Heart left ventricle (tissue), 16 donors: ENCODE measurements at regions of chr13 and their contacts with region 1.

Region 1: DNA sequence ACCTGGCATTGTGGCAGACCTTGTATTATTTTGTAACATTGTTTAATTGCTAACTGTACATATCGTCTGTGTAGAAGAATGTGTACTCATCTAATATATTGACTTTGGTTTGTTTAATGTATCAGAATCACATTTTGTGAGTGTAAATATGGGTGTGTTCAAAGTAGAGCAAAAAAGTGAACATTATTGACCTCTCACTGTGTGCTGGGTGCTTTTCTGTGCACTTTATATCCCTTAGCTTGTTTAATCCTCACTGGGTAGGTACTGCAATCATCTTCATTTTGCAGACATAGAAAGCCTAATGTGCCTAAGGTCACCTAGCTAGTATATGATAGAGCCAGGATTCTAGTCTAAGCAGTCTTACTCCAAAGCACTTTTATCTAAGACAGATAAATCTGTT is 245.1 kb downstream of the MAB21L1 start:
- DNase-seq: no peak
- ATAC-seq: no peak
- H3K4me3 ChIP-seq: no peak overlapping the region
- H3K27ac ChIP-seq: no peak overlapping the region
- H3K4me1 ChIP-seq: no peaks in the 10 kb centered on the region
- H3K27me3 ChIP-seq: no peaks in the 10 kb centered on the region
- CTCF ChIP-seq: no peak
- POLR2A ChIP-seq: no peak

Region 2: DNA sequence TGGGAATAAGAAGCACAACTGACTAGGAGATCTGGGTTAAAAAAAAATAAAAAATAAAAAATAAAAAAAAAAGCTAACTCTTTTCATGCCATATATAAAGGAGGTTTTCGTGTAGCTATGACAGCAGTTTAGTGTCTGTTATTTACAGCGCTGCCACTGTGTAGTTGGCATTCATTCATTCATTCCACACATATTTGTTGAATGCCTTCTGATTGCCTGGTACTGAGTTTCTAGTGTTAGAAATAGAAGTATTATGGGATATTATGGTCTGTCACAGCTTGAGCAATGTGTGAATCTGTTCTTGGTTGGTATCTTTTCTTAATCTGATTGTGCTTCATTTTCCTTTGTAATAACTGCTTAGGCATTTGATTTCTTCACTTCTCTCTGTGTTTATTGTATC is 51.9 kb before region 1 on chr13:
- intact Hi-C with region 1: loop called in 1 of 10 experiments (anchors 10 kb)
- DNase-seq: no peak
- ATAC-seq: peak; percentile 68 to 90 (median 73)
- H3K4me3 ChIP-seq: peak overlapping the region in 6 of 12 donors; percentile 1 to 32 (median 15)
- H3K27ac ChIP-seq: peak overlapping the region; percentile 2 to 73 (median 62)
- H3K4me1 ChIP-seq: peaks cover 0 to 21% (median 1%) of the 10 kb centered on the region in 12 donors
- H3K27me3 ChIP-seq: no peaks in the 10 kb centered on the region
- CTCF ChIP-seq: no peak
- POLR2A ChIP-seq: no peak

Region 3: GRCh38 chr13:35252536-35253205 is 21.2 kb after region 1 on chr13:
- intact Hi-C with region 1: no loop called
- DNase-seq: no peak
- ATAC-seq: no peak
- H3K4me3 ChIP-seq: no peak overlapping the region
- H3K27ac ChIP-seq: no peak overlapping the region
- H3K4me1 ChIP-seq: no peaks in the 10 kb centered on the region
- H3K27me3 ChIP-seq: no peaks in the 10 kb centered on the region
- CTCF ChIP-seq: no peak
- POLR2A ChIP-seq: no peak